ENCODE measurements at regions of chr17 and their contacts with region 1.

Region 1: DNA sequence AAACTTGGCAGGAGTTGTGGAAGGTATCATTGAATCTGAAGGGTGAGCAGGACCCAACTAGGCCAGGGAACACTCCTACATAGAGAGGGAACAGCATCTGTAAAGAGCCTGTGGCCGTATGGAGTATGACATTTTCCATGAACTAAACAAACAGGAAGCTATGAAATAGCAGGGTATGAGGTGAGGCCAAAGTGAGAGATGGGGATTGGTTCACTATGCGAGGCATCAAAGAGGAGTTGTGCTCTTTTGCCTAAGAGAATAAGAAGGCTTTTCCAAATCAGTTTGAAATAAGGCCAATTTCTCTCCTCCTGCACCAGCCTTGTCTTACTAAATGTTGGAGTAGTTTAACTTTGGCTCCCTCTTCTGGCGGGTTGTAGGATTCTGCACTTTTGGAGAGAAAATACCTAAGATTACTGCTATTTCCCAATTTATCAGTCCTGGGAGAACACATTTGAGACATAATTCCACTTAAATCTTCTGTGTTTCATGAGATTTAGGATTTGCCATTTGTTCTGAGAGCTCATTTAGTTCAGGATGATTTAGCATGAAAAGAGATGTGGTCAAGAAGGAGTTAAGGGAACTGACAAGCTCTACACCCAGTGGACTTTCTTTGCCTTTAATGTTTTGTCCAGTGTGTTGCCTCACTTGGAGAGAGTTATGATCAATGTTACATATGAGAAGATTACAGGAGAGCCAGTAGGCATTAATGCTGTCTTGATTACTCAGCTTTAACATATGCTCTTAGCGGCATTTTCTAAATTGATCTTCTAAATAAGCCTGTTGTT is 55.4 kb downstream of the TNRC6C start:
- DNase-seq: peak in 3 of 5 donors; percentile 63 to 90 (median 85)
- H3K4me3 ChIP-seq: no peak overlapping the region
- H3K27ac ChIP-seq: no peak overlapping the region
- H3K4me1 ChIP-seq: no peaks in the 10 kb centered on the region
- H3K27me3 ChIP-seq: no peaks in the 10 kb centered on the region
- CTCF ChIP-seq: peak; percentile 65

Region 2: DNA sequence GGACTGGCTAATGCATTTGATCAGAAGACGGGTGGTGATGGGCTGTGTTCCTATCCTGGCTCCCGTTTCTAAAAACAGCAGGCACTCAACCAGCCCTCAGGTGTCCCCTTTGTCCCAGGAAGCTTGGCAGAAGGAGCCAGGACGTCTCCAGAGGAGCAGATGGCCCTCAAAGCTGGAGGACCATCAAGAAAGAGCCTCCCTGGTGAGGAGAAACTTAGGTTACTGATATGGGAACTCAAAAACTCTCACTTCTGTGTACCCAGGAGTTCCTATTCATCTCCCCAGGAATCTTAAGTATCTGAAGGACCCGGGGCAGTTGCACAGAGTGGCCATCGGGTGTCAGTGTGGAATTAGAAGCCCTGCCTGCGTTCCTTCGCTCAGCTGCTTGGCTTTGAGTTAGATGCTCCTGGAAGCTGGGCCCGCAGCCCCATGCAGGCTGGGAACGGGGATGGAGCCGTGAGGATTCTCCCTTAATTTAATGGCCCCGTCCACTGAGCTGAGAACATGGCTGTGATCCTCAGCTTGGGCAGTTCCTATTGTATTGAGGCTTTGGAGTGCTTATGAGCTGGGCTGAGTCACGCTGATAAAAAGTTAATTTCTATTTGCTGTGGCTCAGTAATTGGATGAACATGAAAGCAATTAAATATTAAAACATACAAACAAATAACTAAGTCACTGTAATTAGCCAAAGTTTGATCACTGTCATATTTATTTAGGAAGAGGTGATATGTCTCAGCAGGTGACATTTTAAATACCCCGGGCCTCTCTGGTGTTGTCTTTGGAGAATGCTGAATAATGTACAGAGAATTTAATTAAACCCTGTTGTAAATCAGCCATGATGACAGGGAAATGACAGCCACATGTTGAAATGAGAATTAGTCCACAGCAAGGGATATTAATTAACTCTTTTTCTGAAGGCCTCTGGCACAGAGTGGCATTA is 471.1 kb before region 1 on chr17:
- intact Hi-C with region 1: loop called (anchors 10 kb)
- DNase-seq: peak; percentile 86 to 94 (median 87)
- H3K4me3 ChIP-seq: no peak overlapping the region
- H3K27ac ChIP-seq: no peak overlapping the region
- H3K4me1 ChIP-seq: no peaks in the 10 kb centered on the region
- H3K27me3 ChIP-seq: no peaks in the 10 kb centered on the region
- CTCF ChIP-seq: peak; percentile 86

Region 3: DNA sequence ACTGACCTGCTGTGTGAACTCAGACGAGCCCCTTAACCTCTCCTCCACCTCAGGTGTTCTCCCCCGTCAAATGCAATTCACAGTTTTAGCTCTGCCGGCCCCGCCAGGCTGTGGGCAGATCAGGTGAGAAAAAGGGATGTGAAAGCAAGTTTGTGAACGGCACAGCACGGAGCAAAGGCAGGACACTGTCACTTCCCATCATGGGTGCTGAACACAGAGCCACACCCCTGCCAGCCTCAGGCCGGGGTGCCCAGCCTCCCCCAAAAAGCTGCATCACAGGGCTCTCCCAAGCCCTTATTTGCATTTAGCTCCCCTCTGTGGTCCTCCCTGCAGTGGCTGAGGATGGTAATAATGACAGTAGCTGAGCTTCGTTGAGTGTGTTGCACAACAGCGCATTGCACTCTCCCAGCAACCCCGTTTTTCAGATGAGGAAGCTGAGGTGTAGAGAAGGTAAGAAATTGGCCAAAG is 144.2 kb before region 1 on chr17:
- intact Hi-C with region 1: no loop called
- DNase-seq: peak in 1 of 5 donors; percentile 71
- H3K4me3 ChIP-seq: no peak overlapping the region
- H3K27ac ChIP-seq: no peak overlapping the region
- H3K4me1 ChIP-seq: no peaks in the 10 kb centered on the region
- H3K27me3 ChIP-seq: no peaks in the 10 kb centered on the region
- CTCF ChIP-seq: no peak

Region 4: DNA sequence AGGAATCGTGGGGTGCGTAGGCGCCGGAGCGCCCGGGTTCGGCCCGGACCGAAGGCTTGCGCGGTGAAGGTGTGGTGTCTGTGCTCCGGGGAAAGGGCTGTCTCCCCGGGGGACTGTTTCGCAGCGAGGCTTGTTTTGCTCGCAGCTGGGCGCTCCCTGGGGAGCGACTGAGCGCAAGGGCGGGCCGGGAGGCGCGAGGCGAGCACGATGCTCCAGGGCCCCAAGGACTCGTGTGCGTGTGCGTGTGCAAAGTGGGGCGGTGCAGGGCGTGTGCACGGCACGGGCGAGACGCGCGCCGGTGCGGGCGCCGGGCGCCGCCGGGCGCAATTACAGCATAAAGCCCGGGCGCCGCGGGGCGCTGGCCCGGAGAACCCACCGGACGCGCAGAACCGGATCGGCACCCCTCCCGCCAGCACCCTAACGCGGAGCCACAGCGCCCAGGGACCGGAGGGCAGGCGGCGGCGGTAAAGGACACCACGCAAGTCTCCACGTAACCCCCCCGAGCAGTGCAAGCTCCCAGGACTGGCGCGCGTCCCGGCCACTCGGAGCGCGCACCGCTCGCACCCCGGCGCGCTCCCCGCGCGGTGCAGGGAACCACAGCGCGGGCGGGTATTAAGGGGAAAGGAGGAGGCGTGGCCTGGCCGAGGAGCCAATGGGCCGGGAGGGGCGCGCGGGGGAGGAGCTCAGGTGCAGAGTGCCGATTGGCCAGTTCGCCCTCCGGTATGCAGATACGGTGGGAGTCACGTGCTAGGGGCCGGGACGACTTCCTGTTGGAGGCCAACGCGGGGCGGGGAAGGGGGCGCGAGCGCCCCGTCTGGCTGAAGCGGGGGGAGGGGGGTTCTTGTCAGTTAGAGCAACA is 55.8 kb before region 1 on chr17 and contains the start of gene TNRC6C:
- intact Hi-C with region 1: no loop called
- DNase-seq: peak; percentile 99 to 100 (median 100)
- H3K4me3 ChIP-seq: peak within 1 kb of the TSS; percentile 65 to 81 (median 78)
- H3K27ac ChIP-seq: peak within 1 kb of the TSS; percentile 25 to 26
- H3K4me1 ChIP-seq: peaks cover 0 to 9% (median 0%) of the 10 kb centered on the region in 3 donors
- H3K27me3 ChIP-seq: peaks cover 6% of the 10 kb centered on the region
- CTCF ChIP-seq: no peak
- total RNA-seq, gene TNRC6C: 29.4 TPM

Region 5: DNA sequence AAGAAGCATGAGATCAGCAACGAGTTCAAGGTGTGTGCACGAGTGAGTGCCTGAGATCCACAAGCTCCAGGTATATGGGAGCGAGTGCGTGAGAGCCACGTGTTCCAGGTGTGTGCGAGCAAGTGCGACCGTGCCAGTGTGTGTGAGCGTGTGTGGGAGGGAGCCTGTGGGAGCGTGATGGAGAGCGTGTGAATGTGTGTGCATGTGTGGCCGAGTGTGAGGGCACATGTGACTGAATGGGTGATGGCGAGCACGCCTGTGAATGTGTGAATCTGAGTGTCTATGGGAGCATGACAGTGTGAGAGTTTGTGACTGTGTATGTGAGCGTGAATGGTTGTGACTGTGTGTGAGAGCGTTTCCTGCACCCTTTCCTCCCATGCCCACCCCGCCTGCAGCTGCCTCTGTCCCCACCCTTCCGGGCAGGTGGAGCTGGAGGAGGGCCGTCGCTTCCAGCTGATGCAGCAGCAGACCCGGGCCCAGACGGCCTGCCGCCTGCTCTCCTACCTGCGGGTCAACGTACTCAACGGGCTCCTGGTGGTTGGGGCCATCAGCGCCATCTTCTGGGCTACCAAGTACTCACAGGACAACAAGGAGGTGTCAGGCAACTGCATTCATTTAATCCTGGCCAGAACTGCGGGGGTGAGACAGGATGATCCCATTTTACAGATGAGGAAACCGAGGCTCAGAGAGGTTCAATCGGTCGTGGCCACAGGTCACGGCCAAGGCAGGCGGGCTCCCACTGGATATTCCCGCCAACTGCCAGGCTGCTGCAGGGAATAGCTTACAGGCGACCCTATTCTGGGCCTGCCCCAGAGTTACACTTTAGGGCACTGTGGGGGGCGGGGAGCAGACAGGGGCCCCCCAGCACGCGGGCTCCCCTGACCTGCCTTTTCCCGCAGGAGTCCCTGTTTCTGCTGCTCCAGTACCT is 120.4 kb after region 1 on chr17:
- intact Hi-C with region 1: no loop called
- DNase-seq: peak; percentile 64 to 89 (median 71)
- H3K4me3 ChIP-seq: no peak overlapping the region
- H3K27ac ChIP-seq: no peak overlapping the region
- H3K4me1 ChIP-seq: peaks cover 0 to 13% (median 0%) of the 10 kb centered on the region in 3 donors
- H3K27me3 ChIP-seq: no peaks in the 10 kb centered on the region
- CTCF ChIP-seq: peak; percentile 37

Measured in kidney (tissue), 22 donors.